MCF 10A (cell line): ENCODE measurements at regions of chr3 and their contacts with region 1.

Region 1: DNA sequence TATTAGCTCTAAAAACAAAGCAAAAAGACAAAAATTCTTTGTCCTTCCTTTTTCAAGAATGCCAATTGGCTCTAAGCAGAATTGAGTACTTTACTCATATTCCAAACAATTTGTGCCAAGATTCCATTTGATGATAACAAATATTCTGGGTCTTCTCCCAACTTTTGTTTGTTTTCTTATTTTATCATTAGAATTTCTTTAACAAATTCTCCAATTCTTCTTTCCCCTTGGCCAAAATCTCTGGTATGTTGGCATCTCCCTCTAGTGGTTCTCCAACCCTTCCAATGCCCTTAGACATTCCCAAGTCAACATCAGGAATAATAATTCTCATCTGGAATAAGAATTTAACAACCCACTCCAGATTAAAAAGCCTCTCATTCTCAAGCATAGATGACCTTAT is 5.3 kb downstream of the CPOX start:
- DNase-seq: no peak
- H3K4me3 Mint-ChIP-seq: no peak overlapping the region
- H3K27ac Mint-ChIP-seq: no peak overlapping the region
- H3K4me1 Mint-ChIP-seq: peaks cover 33% of the 10 kb centered on the region
- H3K27me3 Mint-ChIP-seq: no peaks in the 10 kb centered on the region
- CTCF ChIP-seq: peak; percentile 30

Region 2: DNA sequence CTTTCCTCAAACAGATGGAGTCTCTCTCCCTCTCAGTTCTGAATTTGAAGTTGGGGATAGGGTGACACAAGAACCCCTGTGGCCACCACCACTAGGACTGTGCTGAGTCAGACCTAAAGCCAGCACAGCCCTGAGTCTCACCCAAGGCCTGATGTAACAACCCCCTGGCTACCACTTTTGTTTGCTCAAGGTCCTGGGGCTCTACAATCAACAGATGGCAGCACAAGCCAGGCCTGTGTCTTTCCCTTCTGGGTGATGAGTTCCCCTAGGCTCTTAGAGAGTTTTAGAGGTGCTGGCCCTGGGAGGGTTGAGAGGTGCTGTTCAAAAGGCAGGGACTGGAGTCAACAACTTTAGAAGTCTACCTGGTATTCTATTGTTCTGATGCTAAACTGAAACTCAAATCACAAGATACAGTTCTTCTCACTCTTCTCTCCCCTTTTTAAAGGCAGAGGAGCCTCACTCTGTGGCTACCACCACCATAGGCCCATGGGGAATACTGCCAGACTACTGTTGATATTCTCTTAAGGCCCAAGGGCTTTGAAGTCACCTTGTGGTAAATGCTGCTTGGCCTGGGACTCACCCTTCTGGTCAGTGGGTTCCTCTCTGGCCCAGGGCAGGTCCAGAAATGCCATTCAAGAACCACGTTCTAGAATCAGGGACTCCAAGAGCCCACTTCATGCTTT is 227.9 kb before region 1 on chr3:
- CTCF ChIA-PET with region 1: no interaction called
- POLR2A ChIA-PET with region 1: no interaction called
- intact Hi-C with region 1: loop called (anchors 5 kb)
- DNase-seq: peak; percentile 68
- H3K4me3 Mint-ChIP-seq: no peak overlapping the region
- H3K27ac Mint-ChIP-seq: no peak overlapping the region
- H3K4me1 Mint-ChIP-seq: no peaks in the 10 kb centered on the region
- H3K27me3 Mint-ChIP-seq: no peaks in the 10 kb centered on the region
- CTCF ChIP-seq: peak; percentile 27